HepG2 (cell line): ENCODE measurements at regions of chr1 and their contacts with region 1.

Region 1: GRCh38 chr1:145845514-145846161 is at the start of gene NUDT17:
- DNase-seq: peak; percentile 52
- ATAC-seq: peak; percentile 87
- H3K4me3 ChIP-seq: peak within 1 kb of the TSS; percentile 55 to 78 (median 66)
- H3K27ac ChIP-seq: no peak within 1 kb of the TSS
- H3K4me1 ChIP-seq: peaks cover 12% of the 10 kb centered on the region
- H3K27me3 ChIP-seq: no peaks in the 10 kb centered on the region
- CTCF ChIP-seq: peak; percentile 94
- EP300 ChIP-seq: no peak
- POLR2A ChIP-seq: no peak; a peak in 1 of 4 replicates
- RAD21 ChIP-seq: peak; percentile 78
- total RNA-seq, gene NUDT17: 2.6 TPM in 2 replicates

Region 2: DNA sequence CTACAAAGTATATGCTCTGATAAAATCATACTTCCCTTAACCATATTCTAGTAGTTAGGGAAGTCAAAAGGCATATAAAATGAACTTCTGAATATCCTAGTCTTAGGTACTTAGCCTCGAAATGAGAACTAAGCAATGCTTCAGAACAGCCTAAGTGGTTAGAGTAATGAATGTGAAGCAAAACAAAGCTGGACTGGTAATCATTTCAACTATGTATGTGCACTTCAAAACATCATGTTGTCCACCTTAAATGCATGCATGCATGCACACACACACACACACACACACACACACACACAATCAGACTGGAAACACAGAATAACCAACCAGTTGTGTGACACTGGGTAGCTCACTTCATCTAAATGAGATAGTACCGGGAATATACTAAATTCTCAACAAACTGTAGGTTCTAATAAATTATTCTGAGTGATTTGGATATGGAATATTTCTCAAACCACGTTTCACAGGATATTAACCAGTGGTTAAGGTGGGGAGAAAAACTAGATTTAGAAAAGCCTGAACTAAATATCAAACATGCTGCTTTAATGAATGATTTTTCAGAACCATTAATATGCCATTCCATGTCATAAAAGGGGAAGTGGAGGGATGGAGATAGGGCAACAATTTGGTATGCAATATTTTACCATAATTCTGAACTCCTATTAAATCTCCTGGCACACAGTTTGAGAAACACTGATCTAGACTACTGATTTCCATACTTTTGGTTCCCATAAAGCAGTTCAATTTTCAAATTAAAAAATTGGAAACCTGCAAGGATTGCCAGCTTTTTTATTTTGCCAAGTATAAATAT is 41.2 kb before region 1 on chr1:
- CTCF ChIA-PET with region 1: no interaction called
- POLR2A ChIA-PET with region 1: no interaction called
- in situ Hi-C with region 1: no loop called
- intact Hi-C with region 1: no loop called
- DNase-seq: no peak
- ATAC-seq: no peak
- H3K4me3 ChIP-seq: no peak overlapping the region
- H3K27ac ChIP-seq: no peak overlapping the region
- H3K4me1 ChIP-seq: no peaks in the 10 kb centered on the region
- H3K27me3 ChIP-seq: no peaks in the 10 kb centered on the region
- CTCF ChIP-seq: no peak
- EP300 ChIP-seq: no peak
- POLR2A ChIP-seq: no peak
- RAD21 ChIP-seq: no peak

Region 3: GRCh38 chr1:145823565-145824498 is 21.8 kb before region 1 on chr1 and contains the starts of genes POLR3C and RNF115:
- CTCF ChIA-PET with region 1: no interaction called
- POLR2A ChIA-PET with region 1: interaction called, 19 read pairs
- in situ Hi-C with region 1: no loop called
- intact Hi-C with region 1: no loop called
- DNase-seq: peak; percentile 84
- ATAC-seq: peak; percentile 96
- H3K4me3 ChIP-seq: peak within 1 kb of the TSS; percentile 58 to 88 (median 73)
- H3K27ac ChIP-seq: peak within 1 kb of the TSS; percentile 93
- H3K4me1 ChIP-seq: peaks cover 14% of the 10 kb centered on the region
- H3K27me3 ChIP-seq: no peaks in the 10 kb centered on the region; a peak in 1 of 5 replicates
- CTCF ChIP-seq: 0 out of 2 replicates have a peak, but pooled peaks have one; percentile 10
- EP300 ChIP-seq: no peak
- POLR2A ChIP-seq: peak in 1 of 2 experiments; percentile 72; a peak in 3 of 4 replicates
- RAD21 ChIP-seq: peak; percentile 51; the same call in 1 of the 2 replicates
- total RNA-seq, gene POLR3C: 24.3 TPM in 2 replicates
- total RNA-seq, gene RNF115: 7.8 and 10.1 TPM in 2 replicates

Region 4: DNA sequence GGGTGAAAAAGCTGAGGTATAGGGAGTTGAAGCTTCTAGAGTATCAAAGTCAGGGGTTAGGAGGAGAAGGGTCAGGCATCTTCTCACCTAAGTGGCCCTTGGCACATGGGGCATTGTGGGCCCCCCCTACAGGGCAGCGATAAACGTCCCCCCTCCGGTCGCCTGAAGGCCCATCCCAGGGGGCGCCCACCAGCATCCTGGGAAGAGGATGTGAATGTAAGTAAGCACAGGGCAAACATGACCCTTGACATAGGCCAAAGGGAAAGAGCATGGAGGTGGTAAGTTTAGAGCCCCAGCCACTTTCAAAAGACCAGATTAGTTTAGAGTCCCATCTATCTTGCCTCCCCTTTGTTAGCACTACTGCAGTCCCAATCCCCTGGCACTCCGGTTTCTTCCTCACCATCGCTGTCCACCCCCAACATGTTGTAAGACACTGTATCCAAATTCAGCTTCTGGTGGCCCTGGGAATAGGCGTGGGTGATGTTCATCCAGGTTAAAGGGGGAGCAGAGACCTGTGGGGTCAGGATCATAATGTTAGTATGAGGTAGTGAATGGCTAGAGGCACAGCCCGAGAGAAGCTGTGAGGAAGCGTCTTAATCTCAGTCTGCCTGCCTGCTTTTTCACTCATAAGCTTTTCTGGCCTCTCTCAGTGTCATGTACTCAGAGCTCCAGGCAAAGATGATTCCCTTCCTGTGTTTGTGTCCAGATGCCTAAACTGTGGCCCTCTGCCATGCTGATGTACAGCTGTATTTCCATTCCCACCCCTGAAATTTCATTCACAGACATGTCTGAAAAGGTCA is 61.5 kb after region 1 on chr1:
- CTCF ChIA-PET with region 1: interaction called, 4 read pairs
- POLR2A ChIA-PET with region 1: no interaction called
- in situ Hi-C with region 1: no loop called
- intact Hi-C with region 1: loop called (anchors 1 kb)
- DNase-seq: no peak
- ATAC-seq: peak; percentile 57
- H3K4me3 ChIP-seq: peak overlapping the region in 1 of 3 experiments; percentile 5; a peak in 2 of 6 replicates
- H3K27ac ChIP-seq: no peak overlapping the region
- H3K4me1 ChIP-seq: peaks cover 58% of the 10 kb centered on the region
- H3K27me3 ChIP-seq: no peaks in the 10 kb centered on the region
- CTCF ChIP-seq: peak; percentile 37
- EP300 ChIP-seq: no peak
- POLR2A ChIP-seq: no peak
- RAD21 ChIP-seq: no peak

Region 5: DNA sequence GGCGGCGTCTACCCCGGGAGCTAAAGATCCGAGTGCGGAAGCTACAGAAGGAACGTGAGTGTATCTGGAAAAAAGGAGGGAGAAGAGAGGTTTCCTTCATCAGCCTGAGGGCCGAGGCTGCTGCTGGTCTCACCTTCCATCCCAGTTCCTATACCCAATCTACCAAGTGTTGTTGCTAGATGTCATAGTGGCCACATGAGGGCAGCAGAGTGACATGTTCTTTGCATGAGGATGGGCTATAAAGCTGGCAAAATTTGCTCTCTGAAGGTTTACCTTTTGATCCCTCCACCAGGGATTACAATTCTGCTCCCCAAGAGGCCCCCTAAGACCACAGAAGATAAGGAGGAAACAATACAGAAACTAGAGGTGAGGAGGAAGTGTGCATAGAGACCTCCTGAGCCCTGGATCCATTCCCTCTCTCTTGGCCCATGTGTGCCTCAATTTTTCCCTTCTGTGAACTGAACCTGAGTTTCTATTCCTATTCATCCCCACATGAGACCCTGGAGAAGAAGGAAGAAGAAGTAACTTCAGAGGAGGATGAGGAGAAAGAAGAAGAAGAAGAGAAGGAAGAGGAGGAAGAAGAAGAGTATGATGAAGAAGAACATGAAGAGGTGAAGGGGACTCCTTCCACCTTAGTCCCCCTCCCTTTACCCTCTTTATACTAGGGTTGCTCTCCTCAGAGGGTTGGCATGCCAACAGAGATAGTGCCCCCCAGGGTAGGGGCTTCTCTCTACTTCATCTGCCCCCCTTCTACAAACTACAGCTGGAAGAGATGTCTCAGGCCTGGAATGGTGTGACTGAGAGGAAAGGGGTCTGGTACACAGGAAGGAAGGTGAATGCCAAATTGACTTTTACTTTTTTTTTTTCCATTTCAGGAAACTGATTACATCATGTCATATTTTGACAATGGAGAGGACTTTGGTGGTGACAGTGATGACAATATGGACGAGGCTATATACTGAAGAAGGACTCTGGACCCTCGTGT is 132.1 kb after region 1 on chr1:
- CTCF ChIA-PET with region 1: no interaction called
- POLR2A ChIA-PET with region 1: no interaction called
- in situ Hi-C with region 1: no loop called
- intact Hi-C with region 1: no loop called
- DNase-seq: peak; percentile 78
- ATAC-seq: peak; percentile 76
- H3K4me3 ChIP-seq: no peak overlapping the region
- H3K27ac ChIP-seq: no peak overlapping the region
- H3K4me1 ChIP-seq: peaks cover 66% of the 10 kb centered on the region
- H3K27me3 ChIP-seq: no peaks in the 10 kb centered on the region
- CTCF ChIP-seq: peak; percentile 93
- EP300 ChIP-seq: no peak
- POLR2A ChIP-seq: no peak
- RAD21 ChIP-seq: peak; percentile 81

Region 6: DNA sequence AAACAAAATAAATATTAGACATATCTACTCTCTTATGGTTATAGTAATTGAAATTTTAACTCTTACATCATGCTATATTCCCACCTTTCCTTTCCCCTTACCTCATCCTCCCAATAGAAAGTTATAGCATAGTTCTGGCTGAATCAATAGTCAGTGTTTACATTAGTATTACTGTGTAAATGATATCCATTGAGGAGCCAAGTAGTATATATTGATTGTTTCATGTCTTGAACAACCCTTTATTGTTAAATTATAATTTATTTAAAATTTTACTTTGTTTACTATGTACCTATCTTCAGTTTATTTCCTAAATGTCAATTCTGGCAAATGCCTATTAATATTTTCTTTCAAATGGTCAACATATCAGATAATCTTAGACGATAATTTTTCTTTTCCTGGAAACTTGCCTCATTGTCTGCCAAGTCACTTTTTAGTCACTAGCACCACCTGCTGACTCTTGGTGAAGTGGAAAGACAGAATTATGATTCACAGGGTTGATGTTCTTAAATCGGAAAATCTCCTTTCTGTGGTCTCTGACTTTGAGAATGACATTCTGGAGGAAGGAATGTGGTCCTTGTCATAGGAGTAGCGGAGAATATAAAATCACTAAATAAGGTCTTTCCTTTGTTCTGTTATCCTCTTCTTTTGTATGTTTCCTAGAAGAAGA is 167.2 kb after region 1 on chr1:
- CTCF ChIA-PET with region 1: interaction called, 14 read pairs
- POLR2A ChIA-PET with region 1: no interaction called
- in situ Hi-C with region 1: loop called (anchors 10 kb)
- intact Hi-C with region 1: loop called (anchors 1 kb)
- DNase-seq: peak; percentile 63
- ATAC-seq: peak; percentile 54
- H3K4me3 ChIP-seq: no peak overlapping the region
- H3K27ac ChIP-seq: no peak overlapping the region
- H3K4me1 ChIP-seq: peaks cover 22% of the 10 kb centered on the region
- H3K27me3 ChIP-seq: no peaks in the 10 kb centered on the region
- CTCF ChIP-seq: peak; percentile 79
- EP300 ChIP-seq: no peak
- POLR2A ChIP-seq: no peak
- RAD21 ChIP-seq: peak; percentile 76